ENCODE measurements at regions of chr13 and their contacts with region 1.

Region 1: DNA sequence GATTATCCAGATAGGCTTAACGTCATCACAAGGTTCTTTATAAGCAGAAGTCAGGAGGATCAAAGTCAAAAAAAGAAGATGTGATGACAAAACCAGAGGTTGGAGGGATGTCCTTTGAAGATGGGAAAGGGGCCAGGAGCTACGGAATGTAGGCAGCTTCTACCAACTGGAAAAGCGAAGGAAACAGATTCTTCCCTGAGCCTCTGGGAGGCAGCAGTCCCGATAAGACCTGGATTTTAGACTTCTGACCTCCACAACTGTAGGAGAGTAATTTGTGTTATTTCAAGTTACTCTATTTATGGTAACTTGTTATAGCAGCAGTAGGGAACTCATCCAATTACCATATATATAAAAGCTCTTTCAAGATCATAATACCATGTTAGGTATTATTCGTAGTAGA is 98.8 kb upstream of the MYCBP2 start:
- DNase-seq: no peak
- ATAC-seq: no peak
- H3K4me3 ChIP-seq: no peak overlapping the region
- H3K4me3 Mint-ChIP-seq: no peak overlapping the region
- H3K27ac ChIP-seq: no peak overlapping the region
- H3K27ac Mint-ChIP-seq: no peak overlapping the region
- H3K4me1 ChIP-seq: no peaks in the 10 kb centered on the region
- H3K4me1 Mint-ChIP-seq: no peaks in the 10 kb centered on the region
- H3K27me3 ChIP-seq: no peaks in the 10 kb centered on the region
- H3K27me3 Mint-ChIP-seq: no peaks in the 10 kb centered on the region
- CTCF ChIP-seq: no peak

Region 2: DNA sequence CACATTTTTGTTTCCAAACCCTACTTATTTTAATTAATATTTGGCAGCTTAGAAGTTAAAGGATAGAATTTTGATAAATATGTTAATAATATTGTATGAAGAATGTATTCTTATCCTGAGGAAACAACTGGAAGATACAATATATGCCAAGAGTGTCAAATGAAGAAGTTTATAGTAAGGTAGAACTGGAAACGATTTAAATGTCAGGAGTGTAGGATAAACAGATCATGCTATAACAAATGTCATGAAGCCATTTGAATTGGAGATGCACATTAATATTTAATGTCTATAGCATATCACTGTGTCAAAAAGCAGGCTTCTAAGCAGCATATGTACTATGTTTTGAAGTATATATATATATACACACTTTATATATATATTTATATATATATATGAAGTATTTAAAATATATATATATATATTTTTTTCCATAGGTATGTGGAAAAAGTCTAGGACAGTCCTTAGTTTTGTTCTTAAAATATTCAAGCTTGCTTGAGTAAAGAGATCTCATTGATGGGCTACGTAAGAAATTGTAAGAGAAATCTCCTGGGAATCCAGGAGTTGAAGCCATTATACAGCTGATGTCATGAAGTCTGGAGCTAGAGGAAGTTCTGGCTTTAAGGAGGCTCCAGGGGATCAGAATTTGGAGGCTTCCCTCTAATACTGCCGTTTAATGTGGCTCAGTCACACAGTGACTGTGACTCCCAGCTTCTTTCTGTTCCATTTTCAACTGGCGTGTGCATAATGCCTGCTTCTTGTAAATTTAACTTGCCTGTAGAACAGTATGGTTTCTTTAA is 18.9 kb before region 1 on chr13:
- CTCF ChIA-PET with region 1: no interaction called
- POLR2A ChIA-PET with region 1: no interaction called
- intact Hi-C with region 1: loop called in 1 of 2 experiments (anchors 1 kb)
- DNase-seq: no peak
- ATAC-seq: no peak
- H3K4me3 ChIP-seq: no peak overlapping the region
- H3K4me3 Mint-ChIP-seq: no peak overlapping the region
- H3K27ac ChIP-seq: no peak overlapping the region
- H3K27ac Mint-ChIP-seq: no peak overlapping the region
- H3K4me1 ChIP-seq: no peaks in the 10 kb centered on the region
- H3K4me1 Mint-ChIP-seq: no peaks in the 10 kb centered on the region
- H3K27me3 ChIP-seq: no peaks in the 10 kb centered on the region
- H3K27me3 Mint-ChIP-seq: no peaks in the 10 kb centered on the region
- CTCF ChIP-seq: no peak

Measured in CD8-positive, alpha-beta T cell (primary cell).